ENCODE measurements at regions of chr6 and their contacts with region 1.

Region 1: GRCh38 chr6:149431905-149432775 is 32.1 kb downstream of the SUMO4 start:
- DNase-seq: peak; percentile 65
- H3K4me3 ChIP-seq: peak overlapping the region in 1 of 3 experiments; percentile 17
- H3K27ac ChIP-seq: no peak overlapping the region
- H3K4me1 ChIP-seq: no peaks in the 10 kb centered on the region
- H3K27me3 ChIP-seq: no peaks in the 10 kb centered on the region
- CTCF ChIP-seq: peak; percentile 82 to 89

Region 2: GRCh38 chr6:148559848-148560433 is 872.2 kb before region 1 on chr6:
- CTCF ChIA-PET with region 1: no interaction called
- dilution Hi-C with region 1: no loop called
- in situ Hi-C with region 1: no loop called
- intact Hi-C with region 1: loop called (anchors 5 kb)
- DNase-seq: peak; percentile 35
- H3K4me3 ChIP-seq: peak overlapping the region in 2 of 3 experiments; percentile 38 to 45
- H3K27ac ChIP-seq: no peak overlapping the region
- H3K4me1 ChIP-seq: peaks cover 5% of the 10 kb centered on the region
- H3K27me3 ChIP-seq: no peaks in the 10 kb centered on the region
- CTCF ChIP-seq: peak; percentile 86 to 89

Region 3: GRCh38 chr6:149082286-149082707 is 349.8 kb before region 1 on chr6:
- CTCF ChIA-PET with region 1: interaction called, 15 read pairs
- dilution Hi-C with region 1: no loop called
- in situ Hi-C with region 1: loop called (anchors 5 to 10 kb)
- intact Hi-C with region 1: loop called (anchors 1 kb)
- DNase-seq: peak; percentile 52
- H3K4me3 ChIP-seq: no peak overlapping the region
- H3K27ac ChIP-seq: no peak overlapping the region
- H3K4me1 ChIP-seq: peaks cover 15% of the 10 kb centered on the region
- H3K27me3 ChIP-seq: no peaks in the 10 kb centered on the region
- CTCF ChIP-seq: peak; percentile 79 to 81

Region 4: DNA sequence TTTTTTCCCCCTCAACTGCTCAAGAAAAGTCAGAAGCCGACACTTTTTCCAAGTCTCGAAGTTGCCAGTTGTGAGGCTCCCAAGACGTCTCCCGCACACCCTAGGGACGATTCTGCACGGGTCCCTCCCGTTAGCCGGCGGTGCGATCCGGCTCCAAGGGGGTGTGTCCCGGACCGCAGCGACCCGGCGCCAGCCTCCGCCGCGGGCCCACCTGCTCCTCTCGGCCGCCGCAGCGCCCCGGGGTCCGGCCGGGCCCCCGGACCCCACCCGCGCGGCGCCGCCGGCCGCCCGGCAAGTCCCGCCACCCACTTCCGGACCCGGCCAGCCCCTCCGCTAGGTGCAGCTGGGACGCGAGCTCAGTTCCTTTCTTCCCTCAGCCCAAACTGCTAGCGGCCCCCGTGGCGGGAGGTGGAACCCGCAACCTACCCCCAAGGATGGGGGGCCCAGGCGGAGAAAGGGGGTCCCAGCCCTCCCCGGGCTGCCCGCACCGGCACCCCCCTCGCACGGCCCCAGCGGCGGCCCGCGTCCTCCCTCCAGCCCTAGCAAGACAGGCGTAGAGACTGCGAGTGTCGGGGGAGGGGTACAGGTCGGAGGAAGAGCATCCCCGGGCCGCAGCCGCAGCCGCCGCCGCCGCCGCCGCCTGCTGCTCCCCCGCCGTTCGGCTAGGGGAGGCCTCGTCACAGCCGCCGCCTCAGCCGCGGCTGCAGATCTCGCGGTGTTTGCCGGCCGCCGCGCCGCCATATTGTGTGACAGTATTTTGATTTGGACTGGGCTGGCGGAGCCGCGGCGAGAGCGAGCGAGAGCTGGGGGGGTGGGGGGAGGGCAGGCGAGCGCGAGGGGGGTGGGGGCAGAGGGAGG is 115.1 kb before region 1 on chr6:
- CTCF ChIA-PET with region 1: no interaction called
- dilution Hi-C with region 1: no loop called
- in situ Hi-C with region 1: no loop called
- intact Hi-C with region 1: loop called (anchors 2 kb)
- DNase-seq: peak; percentile 91
- H3K4me3 ChIP-seq: peak overlapping the region; percentile 95 to 98 (median 96)
- H3K27ac ChIP-seq: peak overlapping the region; percentile 74
- H3K4me1 ChIP-seq: peaks cover 6% of the 10 kb centered on the region
- H3K27me3 ChIP-seq: no peaks in the 10 kb centered on the region
- CTCF ChIP-seq: no peak

Region 5: GRCh38 chr6:149513915-149514314 is 81.8 kb after region 1 on chr6:
- CTCF ChIA-PET with region 1: interaction called, 6 read pairs
- dilution Hi-C with region 1: loop called (anchors 5 kb)
- in situ Hi-C with region 1: no loop called
- intact Hi-C with region 1: loop called (anchors 5 kb)
- DNase-seq: no peak
- H3K4me3 ChIP-seq: no peak overlapping the region
- H3K27ac ChIP-seq: no peak overlapping the region
- H3K4me1 ChIP-seq: no peaks in the 10 kb centered on the region
- H3K27me3 ChIP-seq: no peaks in the 10 kb centered on the region
- CTCF ChIP-seq: no peak

Region 6: GRCh38 chr6:149717588-149718458 is 285.7 kb after region 1 on chr6 and contains the start of gene LATS1:
- CTCF ChIA-PET with region 1: no interaction called
- dilution Hi-C with region 1: no loop called
- in situ Hi-C with region 1: no loop called
- intact Hi-C with region 1: no loop called
- DNase-seq: peak; percentile 91
- H3K4me3 ChIP-seq: peak within 1 kb of the TSS; percentile 66 to 92 (median 91)
- H3K27ac ChIP-seq: peak within 1 kb of the TSS; percentile 86
- H3K4me1 ChIP-seq: no peaks in the 10 kb centered on the region
- H3K27me3 ChIP-seq: no peaks in the 10 kb centered on the region
- CTCF ChIP-seq: no peak
- total RNA-seq, gene LATS1: 19.8 to 26.6 TPM

Measured in mammary epithelial cell (primary cell).